ENCODE measurements at regions of chr12 and their contacts with region 1.

Region 1: DNA sequence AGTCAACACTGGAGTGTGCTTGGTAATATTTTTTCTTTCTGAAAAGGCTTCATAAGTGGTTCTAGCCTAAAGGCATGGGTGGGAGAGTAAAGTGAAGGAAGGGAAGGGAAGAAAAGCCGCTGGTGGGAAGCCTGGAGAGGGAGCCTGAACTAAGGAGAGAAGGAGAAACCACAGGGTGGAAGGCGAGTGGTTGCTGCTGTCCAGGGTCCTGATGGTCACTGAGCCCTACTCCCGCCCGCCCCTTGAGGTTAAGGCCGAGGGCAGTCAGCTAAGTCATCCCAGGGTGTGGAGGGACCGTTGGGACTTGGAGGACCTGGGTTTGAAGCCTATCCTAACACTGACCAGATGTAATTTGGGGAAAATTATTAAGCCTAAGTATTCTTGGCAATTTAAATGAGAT is 189.1 kb downstream of the PIWIL1 start:
- DNase-seq: peak; percentile 60 to 72
- H3K4me3 ChIP-seq: no peak overlapping the region
- H3K4me3 Mint-ChIP-seq: no peak overlapping the region
- H3K27ac Mint-ChIP-seq: no peak overlapping the region
- H3K4me1 ChIP-seq: no peaks in the 10 kb centered on the region
- H3K4me1 Mint-ChIP-seq: no peaks in the 10 kb centered on the region
- H3K27me3 ChIP-seq: no peaks in the 10 kb centered on the region
- H3K27me3 Mint-ChIP-seq: peaks cover 16% of the 10 kb centered on the region
- CTCF ChIP-seq: no peak

Region 2: DNA sequence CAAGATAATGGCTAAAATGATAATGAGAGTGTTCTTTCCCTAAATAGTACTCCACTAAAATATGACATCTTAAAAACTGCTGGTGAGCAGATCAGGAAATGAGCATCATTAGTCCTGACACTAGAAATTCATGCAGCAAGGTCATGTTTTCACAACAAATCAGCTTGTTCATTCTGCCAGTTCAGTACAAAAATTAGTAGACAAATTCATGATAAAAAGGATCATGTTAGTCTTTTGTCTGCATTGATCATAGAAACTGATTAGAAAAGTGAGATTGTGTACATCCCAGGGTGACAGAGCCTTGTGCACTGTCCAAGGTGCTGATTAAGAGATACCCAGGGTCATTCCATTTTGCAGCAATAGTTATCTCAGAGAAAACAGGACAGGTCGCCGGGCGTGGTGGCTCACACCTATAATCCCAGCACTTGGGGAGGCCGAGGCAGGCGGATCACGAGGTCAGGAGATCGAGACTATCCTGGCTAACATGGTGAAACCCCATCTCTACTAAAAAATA is 25.7 kb after region 1 on chr12:
- CTCF ChIA-PET with region 1: no interaction called
- POLR2A ChIA-PET with region 1: no interaction called
- intact Hi-C with region 1: loop called (anchors 2 kb)
- DNase-seq: peak in 1 of 2 experiments; percentile 25
- H3K4me3 ChIP-seq: no peak overlapping the region
- H3K4me3 Mint-ChIP-seq: no peak overlapping the region
- H3K27ac Mint-ChIP-seq: no peak overlapping the region
- H3K4me1 ChIP-seq: no peaks in the 10 kb centered on the region
- H3K4me1 Mint-ChIP-seq: no peaks in the 10 kb centered on the region
- H3K27me3 ChIP-seq: no peaks in the 10 kb centered on the region; the same call in 1 of the 2 replicates
- H3K27me3 Mint-ChIP-seq: peaks cover 5% of the 10 kb centered on the region
- CTCF ChIP-seq: no peak

Region 3: DNA sequence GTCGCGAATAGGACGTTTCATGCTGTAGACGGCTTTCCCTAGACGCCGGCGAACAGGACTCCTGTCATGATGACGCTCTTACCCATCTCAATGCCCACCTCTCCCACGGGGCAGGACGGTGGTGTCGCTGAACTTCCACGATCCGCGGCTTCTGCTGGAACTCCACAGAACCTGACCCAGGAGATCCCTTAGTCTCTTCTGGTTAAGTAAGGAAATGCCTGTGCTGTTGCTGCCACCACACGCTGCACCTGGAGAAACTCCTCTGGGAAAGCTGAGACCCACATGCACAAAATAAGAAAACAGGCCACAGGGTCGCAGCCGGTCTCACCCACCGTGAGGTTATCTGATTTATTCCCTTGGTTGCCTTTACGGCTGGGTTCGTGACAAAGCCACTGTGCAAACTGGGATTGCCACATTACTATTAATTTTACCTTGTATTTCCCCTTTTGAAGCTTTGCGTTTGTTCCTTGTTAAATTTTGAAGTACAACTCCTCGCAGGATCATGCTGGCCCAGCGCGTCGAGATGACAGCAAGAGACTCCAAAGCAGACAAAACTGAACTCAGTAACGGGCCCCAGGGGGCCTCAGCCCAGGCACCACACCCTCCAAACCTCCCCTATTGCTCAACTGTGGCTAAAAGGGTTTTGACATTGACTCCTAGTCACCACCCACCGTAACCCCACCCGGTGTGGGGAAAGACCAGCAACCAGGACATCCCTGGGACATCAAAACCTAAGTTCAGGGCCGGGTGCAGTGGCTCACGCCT is 1292.2 kb after region 1 on chr12:
- CTCF ChIA-PET with region 1: no interaction called
- POLR2A ChIA-PET with region 1: no interaction called
- intact Hi-C with region 1: no loop called
- DNase-seq: no peak
- H3K4me3 ChIP-seq: no peak overlapping the region
- H3K4me3 Mint-ChIP-seq: no peak overlapping the region
- H3K27ac Mint-ChIP-seq: no peak overlapping the region
- H3K4me1 ChIP-seq: peaks cover 3% of the 10 kb centered on the region; the same call in 1 of the 2 replicates
- H3K4me1 Mint-ChIP-seq: peaks cover 11% of the 10 kb centered on the region
- H3K27me3 ChIP-seq: no peaks in the 10 kb centered on the region
- H3K27me3 Mint-ChIP-seq: no peaks in the 10 kb centered on the region
- CTCF ChIP-seq: no peak